ENCODE measurements at regions of chr4 and their contacts with region 1.

Region 1: DNA sequence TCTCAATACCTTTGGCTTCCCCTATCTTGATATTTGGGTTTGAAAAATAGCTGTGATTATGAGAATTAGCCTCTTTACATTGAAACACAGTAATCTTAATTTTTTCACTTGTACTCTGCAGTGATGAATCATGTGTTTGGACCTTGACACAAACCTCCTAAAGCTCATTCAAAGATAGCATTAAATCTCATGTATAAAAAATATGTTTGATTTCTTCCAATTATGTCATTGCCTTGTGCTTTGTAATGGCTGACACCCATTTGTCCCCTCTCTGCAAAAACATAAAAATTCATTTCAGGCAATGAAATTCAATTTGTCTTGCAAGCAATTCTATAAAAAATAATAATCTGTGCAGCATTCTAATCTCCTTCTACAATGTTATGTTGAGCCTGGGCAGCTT is 422.4 kb upstream of the BOD1L1 start:
- DNase-seq: no peak
- H3K4me3 ChIP-seq: no peak overlapping the region
- H3K27ac ChIP-seq: no peak overlapping the region
- H3K4me1 ChIP-seq: no peaks in the 10 kb centered on the region
- H3K27me3 ChIP-seq: no peaks in the 10 kb centered on the region

Region 2: DNA sequence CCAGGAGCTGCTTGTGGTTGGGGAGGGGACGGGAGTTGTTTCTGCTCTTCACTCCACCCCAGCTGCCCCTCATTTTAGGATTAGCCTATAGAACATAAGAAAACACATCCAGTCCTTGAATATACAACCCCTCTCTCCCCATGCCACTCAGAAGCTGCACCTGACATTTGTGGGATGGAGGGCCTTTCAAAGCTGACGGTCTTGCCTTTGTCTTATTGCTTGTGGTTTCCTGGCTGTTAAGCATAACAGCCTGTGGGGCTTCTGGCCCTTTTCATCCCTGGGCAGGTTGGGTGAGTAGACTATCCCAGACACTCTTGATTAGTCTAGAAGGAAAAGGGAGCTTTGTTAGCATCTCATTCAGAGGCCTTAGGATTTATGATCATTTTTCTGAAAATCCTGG is 14.9 kb before region 1 on chr4:
- CTCF ChIA-PET with region 1: interaction called, 10 read pairs
- POLR2A ChIA-PET with region 1: no interaction called
- DNase-seq: peak in 2 of 3 donors; percentile 21 to 27
- H3K4me3 ChIP-seq: no peak overlapping the region
- H3K27ac ChIP-seq: no peak overlapping the region
- H3K4me1 ChIP-seq: peaks cover 0 to 10% (median 8%) of the 10 kb centered on the region in 4 experiments
- H3K27me3 ChIP-seq: no peaks in the 10 kb centered on the region

Measured in common myeloid progenitor, CD34-positive (primary cell).